T-cell (primary cell): ENCODE measurements at regions of chr10 and their contacts with region 1.

Region 1: DNA sequence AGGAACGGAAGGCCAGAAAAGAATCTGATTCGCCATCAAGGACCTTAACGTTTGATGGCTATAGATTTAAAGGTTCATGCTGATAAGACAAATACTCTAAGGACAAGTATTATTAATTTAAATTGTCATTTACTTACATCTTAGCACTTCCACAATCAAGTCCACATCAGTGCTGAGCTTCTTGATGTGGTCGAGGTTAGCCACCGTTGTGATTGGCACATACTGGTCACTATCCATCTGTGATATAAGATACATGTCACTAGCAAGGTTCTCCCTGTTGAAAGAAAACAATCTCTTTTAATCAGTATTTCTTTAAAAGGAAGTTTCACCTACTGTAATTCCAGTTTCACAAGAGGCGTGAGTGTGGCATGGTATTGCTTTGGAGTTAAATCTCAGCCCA is 88.7 kb downstream of the LARP4B start:
- DNase-seq: no peak
- ATAC-seq: no peak
- H3K4me3 ChIP-seq: no peak overlapping the region
- H3K4me3 Mint-ChIP-seq: no peak overlapping the region
- H3K27ac ChIP-seq: no peak overlapping the region
- H3K27ac Mint-ChIP-seq: no peak overlapping the region
- H3K4me1 ChIP-seq: peaks cover 0 to 12% of the 10 kb centered on the region in 2 experiments
- H3K4me1 Mint-ChIP-seq: peaks cover 33 to 41% (median 37%) of the 10 kb centered on the region in 3 donors
- H3K27me3 ChIP-seq: no peaks in the 10 kb centered on the region
- H3K27me3 Mint-ChIP-seq: no peaks in the 10 kb centered on the region

Region 2: DNA sequence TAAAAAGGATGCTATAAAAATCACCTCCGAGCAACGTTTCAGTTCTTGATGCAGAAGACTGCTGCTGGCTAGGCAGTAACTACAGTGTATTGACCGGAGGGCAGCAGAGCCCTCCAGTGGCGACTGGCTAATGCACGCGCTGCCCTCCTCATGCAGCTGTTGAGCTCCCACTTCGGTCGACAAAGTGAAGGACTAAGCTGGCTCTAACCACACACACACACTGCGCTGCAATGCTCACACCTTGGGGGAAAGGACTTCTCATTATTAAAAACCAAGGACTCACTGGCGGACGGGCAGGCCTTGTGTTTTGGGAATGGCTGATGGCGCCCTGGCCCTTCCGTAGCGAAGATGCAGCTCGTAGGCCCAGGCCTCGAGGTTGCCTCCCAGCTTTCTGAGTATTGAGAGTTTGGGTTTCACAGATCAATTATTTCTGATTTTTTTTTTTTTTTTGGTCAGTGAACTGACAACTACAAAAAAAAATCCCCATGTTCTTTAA is 32.4 kb before region 1 on chr10:
- CTCF ChIA-PET with region 1: no interaction called
- POLR2A ChIA-PET with region 1: interaction called in 1 of 2 experiments, 15 read pairs
- DNase-seq: no peak
- ATAC-seq: no peak
- H3K4me3 ChIP-seq: no peak overlapping the region
- H3K4me3 Mint-ChIP-seq: no peak overlapping the region
- H3K27ac ChIP-seq: no peak overlapping the region
- H3K27ac Mint-ChIP-seq: no peak overlapping the region
- H3K4me1 ChIP-seq: no peaks in the 10 kb centered on the region
- H3K4me1 Mint-ChIP-seq: no peaks in the 10 kb centered on the region
- H3K27me3 ChIP-seq: no peaks in the 10 kb centered on the region
- H3K27me3 Mint-ChIP-seq: no peaks in the 10 kb centered on the region